ENCODE measurements at regions of chr3 and their contacts with region 1.

Region 1: DNA sequence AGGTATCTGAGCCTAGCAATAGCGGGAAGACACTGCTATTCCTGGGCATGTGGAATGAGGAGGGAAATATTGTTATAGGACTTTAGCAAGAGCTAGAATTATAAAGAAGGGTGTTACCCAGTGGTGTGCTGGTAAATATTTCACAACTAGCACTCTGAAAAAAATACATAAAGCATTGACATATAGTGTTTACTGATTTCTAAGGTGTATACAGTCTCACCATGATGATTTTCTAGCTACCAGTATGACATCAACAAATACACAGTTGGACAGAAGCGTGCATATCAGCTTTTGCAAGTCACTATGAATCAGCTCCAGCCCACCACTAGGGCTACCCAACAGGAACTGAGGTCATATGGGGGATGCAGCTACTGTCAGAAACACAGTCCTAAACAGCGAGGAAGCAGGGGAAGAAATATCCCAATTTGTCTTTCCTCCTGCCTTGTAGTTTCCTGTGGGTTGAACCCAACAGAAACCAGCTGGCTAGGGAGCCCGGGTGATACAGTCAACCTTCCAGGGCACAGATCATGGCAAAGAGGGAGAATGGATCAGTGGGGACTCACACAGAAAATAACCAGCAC is 39.6 kb downstream of the HGD start:
- DNase-seq: peak; percentile 40
- H3K4me3 ChIP-seq: no peak overlapping the region
- H3K27ac ChIP-seq: peak overlapping the region; percentile 54
- H3K4me1 ChIP-seq: peaks cover 9% of the 10 kb centered on the region
- H3K27me3 ChIP-seq: no peaks in the 10 kb centered on the region
- CTCF ChIP-seq: peak in 1 of 2 donors; percentile 3
- POLR2A ChIP-seq: no peak

Region 2: DNA sequence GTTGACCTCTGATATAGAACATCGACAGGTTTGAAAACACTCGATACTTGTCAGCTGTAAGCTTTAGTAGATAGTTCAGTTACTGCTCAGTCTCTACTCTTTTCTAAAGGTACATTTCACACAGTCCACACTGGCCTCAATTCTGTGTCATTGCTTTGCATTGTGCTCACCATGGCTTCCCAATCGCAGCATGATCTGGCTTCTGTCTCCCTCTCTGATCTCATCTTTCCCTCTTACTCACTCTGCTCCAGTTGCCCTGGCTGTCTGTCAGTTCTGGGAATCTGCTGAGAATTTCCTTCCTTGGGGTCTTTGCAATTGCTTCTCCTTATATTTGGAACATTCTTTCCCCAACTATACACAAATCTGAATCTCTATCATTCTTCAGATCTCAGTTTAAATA is 180.7 kb after region 1 on chr3:
- CTCF ChIA-PET with region 1: no interaction called
- POLR2A ChIA-PET with region 1: no interaction called
- dilution Hi-C with region 1: no loop called
- intact Hi-C with region 1: no loop called
- DNase-seq: no peak
- H3K4me3 ChIP-seq: no peak overlapping the region
- H3K27ac ChIP-seq: no peak overlapping the region
- H3K4me1 ChIP-seq: no peaks in the 10 kb centered on the region
- H3K27me3 ChIP-seq: peaks cover 0 to 2% of the 10 kb centered on the region in 2 experiments
- CTCF ChIP-seq: no peak
- POLR2A ChIP-seq: no peak

Region 3: GRCh38 chr3:120908030-120908794 is 265.8 kb after region 1 on chr3 and contains the start of gene STXBP5L:
- CTCF ChIA-PET with region 1: no interaction called
- POLR2A ChIA-PET with region 1: no interaction called
- dilution Hi-C with region 1: no loop called
- intact Hi-C with region 1: loop called (anchors 5 kb)
- DNase-seq: peak; percentile 83
- H3K4me3 ChIP-seq: peak within 1 kb of the TSS; percentile 5 to 60 (median 26)
- H3K27ac ChIP-seq: no peak within 1 kb of the TSS
- H3K4me1 ChIP-seq: peaks cover 9% of the 10 kb centered on the region
- H3K27me3 ChIP-seq: peaks cover 15 to 33% of the 10 kb centered on the region in 2 experiments
- CTCF ChIP-seq: no peak
- POLR2A ChIP-seq: no peak
- total RNA-seq, gene STXBP5L: not detected in 2 replicates

Measured in endothelial cell of umbilical vein (primary cell).